IMR-90 (cell line): ENCODE measurements at regions of chr19 and their contacts with region 1.

Region 1: DNA sequence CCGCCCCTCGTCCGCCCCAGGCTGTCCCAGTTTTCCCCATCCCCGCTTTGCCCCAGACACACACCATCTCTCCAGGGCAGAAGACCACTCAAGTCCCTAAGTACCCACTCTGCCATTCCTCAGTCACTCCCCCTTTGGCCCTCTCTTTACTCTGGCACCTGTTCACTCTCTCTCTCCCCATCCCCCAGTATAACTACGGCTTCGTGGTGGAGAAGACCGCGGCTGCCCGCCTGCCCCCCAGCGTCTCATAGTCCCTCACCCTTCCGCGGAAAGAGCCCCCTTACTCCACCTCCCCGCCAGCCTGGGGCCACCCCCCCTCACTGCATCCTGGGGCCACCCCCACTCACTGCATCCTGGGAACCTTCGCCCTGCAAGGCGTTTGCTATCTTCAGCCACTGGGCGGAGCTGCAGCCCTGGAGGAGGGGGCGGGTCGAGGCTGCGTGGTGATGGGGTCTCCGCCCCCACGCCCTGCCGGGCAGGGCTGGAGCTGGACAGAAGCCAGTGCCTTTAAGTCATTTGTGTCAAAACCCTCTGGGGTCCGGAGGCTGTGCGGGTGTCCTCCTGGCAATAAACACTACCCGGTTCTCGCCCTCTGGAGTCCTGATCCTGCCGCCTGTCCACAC is 5.0 kb downstream of the MVB12A start:
- DNase-seq: peak; percentile 23
- ATAC-seq: peak; percentile 86
- H3K4me3 ChIP-seq: no peak overlapping the region
- H3K27ac ChIP-seq: no peak overlapping the region
- H3K4me1 ChIP-seq: 0 out of 2 replicates have a peak, but pooled peaks cover 2% of the 10 kb centered on the region
- H3K27me3 ChIP-seq: no peaks in the 10 kb centered on the region
- CTCF ChIP-seq: peak; percentile 46
- POLR2A ChIP-seq: no peak
- RAD21 ChIP-seq: peak; percentile 35; the same call in 1 of the 2 replicates

Region 2: DNA sequence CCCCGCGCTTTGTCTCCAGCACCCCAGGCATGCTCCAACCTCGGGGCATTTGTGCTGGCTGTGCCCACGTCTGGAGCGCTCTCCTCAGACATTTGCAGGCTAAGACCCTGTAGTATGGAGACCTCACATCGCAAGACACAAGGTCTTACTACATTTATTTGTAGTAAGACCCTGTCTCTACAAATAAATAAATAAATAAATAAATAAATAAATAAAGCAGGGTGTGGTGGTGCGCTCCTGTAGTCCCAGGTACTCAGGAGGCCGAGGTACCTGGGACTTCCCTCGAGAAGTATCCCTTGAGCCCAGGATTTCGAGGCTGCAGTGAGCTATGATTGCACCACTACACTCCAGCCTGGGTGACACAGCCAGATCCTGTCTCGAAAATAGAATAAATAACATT is 31.3 kb after region 1 on chr19:
- CTCF ChIA-PET with region 1: no interaction called
- POLR2A ChIA-PET with region 1: interaction called, 10 read pairs
- dilution Hi-C with region 1: no loop called
- in situ Hi-C with region 1: no loop called
- intact Hi-C with region 1: no loop called
- DNase-seq: no peak
- ATAC-seq: peak; percentile 49
- H3K4me3 ChIP-seq: no peak overlapping the region
- H3K27ac ChIP-seq: no peak overlapping the region
- H3K4me1 ChIP-seq: no peaks in the 10 kb centered on the region; the same call in 1 of the 2 replicates
- H3K27me3 ChIP-seq: peaks cover 33% of the 10 kb centered on the region
- CTCF ChIP-seq: no peak
- POLR2A ChIP-seq: no peak
- RAD21 ChIP-seq: no peak